Transverse colon (tissue), 4 donors: ENCODE measurements at regions of chr14 and their contacts with region 1.

Region 1: GRCh38 chr14:100949323-100949722 is 45.8 kb upstream of the RTL1 start:
- DNase-seq: no peak
- H3K4me3 ChIP-seq: no peak overlapping the region
- H3K27ac ChIP-seq: no peak overlapping the region
- H3K4me1 ChIP-seq: no peaks in the 10 kb centered on the region
- H3K27me3 ChIP-seq: no peaks in the 10 kb centered on the region
- CTCF ChIP-seq: no peak
- EP300 ChIP-seq: no peak
- POLR2A ChIP-seq: no peak

Region 2: GRCh38 chr14:100910888-100911664 is 38.2 kb before region 1 on chr14:
- in situ Hi-C with region 1: no loop called
- intact Hi-C with region 1: loop called (anchors 1 kb)
- DNase-seq: no peak
- H3K4me3 ChIP-seq: no peak overlapping the region
- H3K27ac ChIP-seq: no peak overlapping the region
- H3K4me1 ChIP-seq: no peaks in the 10 kb centered on the region
- H3K27me3 ChIP-seq: peaks cover 13% of the 10 kb centered on the region
- CTCF ChIP-seq: no peak
- EP300 ChIP-seq: no peak
- POLR2A ChIP-seq: no peak